Sciatic nerve (tissue), 2 donors: ENCODE measurements at regions of chr21 and their contacts with region 1.

Region 1: GRCh38 chr21:37944488-37944887 is 28.2 kb upstream of the KCNJ6 start:
- DNase-seq: no peak
- ATAC-seq: no peak

Region 2: GRCh38 chr21:38669176-38669575 is 724.7 kb after region 1 on chr21:
- intact Hi-C with region 1: loop called (anchors 5 kb)
- DNase-seq: no peak
- ATAC-seq: no peak